ENCODE measurements at regions of chr5 and their contacts with region 1.

Region 1: DNA sequence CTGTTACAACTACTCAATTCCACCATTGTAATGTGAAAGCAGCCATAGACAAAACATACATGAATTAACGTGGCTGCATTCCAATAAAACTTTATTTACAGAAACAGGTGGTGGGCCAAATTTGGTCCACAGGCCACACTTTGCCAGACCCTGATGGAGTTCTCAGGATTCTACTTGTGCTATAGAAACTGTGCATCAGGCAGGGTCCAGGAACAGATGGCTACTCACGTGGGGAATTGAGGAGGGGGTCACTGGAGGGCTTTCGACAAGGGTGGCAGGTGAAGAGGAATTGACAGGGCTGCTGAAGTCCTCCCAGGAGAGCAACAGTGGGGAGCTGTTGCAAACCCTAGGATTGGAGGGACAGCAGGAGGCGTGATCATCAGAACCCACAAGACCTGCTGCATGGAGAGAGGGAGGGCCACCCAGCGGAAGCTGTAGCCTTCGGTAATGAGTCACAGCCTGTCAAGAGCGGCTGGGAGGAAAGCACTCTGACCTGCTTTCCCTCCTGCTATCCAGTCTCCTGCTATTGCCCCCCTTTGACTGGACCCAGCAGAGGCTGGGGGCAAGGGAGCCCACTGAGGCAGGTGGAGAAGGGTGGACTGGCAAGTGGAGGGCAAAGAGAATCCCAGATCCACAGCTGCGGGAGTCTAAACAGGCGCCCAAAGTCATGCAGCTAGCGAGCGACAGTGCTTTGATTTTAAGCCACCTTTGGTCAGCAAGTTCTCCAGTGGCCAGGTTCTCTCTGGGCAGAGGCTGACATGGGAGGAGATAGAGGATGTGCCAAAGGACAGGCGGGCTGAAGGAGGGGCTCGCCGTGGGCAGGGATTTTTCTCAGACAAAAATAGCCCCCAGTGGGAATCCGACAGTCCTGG is 138.3 kb upstream of the SMIM23 start:
- DNase-seq: peak; percentile 86
- H3K4me3 ChIP-seq: no peak overlapping the region
- H3K27ac ChIP-seq: peak overlapping the region; percentile 30
- H3K4me1 ChIP-seq: peaks cover 13% of the 10 kb centered on the region
- H3K27me3 ChIP-seq: no peaks in the 10 kb centered on the region
- CTCF ChIP-seq: peak in 1 of 2 donors; percentile 15
- POLR2A ChIP-seq: no peak

Region 2: DNA sequence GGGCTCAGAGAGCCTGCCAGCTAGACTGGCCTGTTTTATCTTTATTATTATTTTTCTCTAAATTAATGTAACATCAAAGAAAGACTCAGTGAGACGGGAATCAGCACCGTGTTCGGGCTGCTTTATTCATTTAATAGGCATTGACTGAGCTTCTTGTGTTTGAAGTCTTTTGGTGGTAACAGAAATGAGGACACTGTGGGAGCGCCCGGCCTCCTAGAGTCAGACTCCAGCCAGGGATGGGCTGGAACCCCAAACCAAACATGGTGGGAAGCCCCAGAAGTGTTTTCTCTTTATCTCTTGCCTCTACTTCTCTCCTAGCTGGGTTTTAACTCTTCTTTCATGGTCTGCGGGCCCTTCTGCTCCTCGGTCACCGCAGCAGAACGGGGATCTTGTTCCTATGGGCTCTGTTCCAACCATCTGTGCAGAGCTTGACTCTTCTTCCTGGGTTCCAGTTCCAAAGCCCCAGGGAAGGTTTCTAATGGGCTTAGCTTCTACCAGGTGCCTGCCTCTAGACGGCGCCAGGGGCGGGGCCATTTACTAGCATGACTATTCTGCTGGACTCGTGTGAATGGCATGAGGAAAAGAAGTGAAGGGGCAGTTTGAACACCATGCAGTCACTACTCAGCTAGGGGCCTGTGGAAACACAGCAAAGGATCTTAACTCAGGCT is 104.0 kb before region 1 on chr5:
- CTCF ChIA-PET with region 1: no interaction called
- POLR2A ChIA-PET with region 1: no interaction called
- dilution Hi-C with region 1: no loop called
- intact Hi-C with region 1: no loop called
- DNase-seq: no peak
- H3K4me3 ChIP-seq: no peak overlapping the region
- H3K27ac ChIP-seq: no peak overlapping the region
- H3K4me1 ChIP-seq: no peaks in the 10 kb centered on the region
- H3K27me3 ChIP-seq: no peaks in the 10 kb centered on the region
- CTCF ChIP-seq: no peak
- POLR2A ChIP-seq: no peak

Region 3: GRCh38 chr5:171614971-171615653 is 32.2 kb before region 1 on chr5:
- CTCF ChIA-PET with region 1: no interaction called
- POLR2A ChIA-PET with region 1: no interaction called
- dilution Hi-C with region 1: no loop called
- intact Hi-C with region 1: no loop called
- DNase-seq: no peak
- H3K4me3 ChIP-seq: no peak overlapping the region
- H3K27ac ChIP-seq: no peak overlapping the region
- H3K4me1 ChIP-seq: no peaks in the 10 kb centered on the region
- H3K27me3 ChIP-seq: peaks cover 2 to 7% of the 10 kb centered on the region in 2 experiments
- CTCF ChIP-seq: no peak
- POLR2A ChIP-seq: no peak

Region 4: GRCh38 chr5:171657473-171657872 is 10.2 kb after region 1 on chr5:
- CTCF ChIA-PET with region 1: interaction called, 11 read pairs
- POLR2A ChIA-PET with region 1: interaction called, 3 read pairs
- dilution Hi-C with region 1: no loop called
- intact Hi-C with region 1: no loop called
- DNase-seq: no peak
- H3K4me3 ChIP-seq: no peak overlapping the region
- H3K27ac ChIP-seq: no peak overlapping the region
- H3K4me1 ChIP-seq: no peaks in the 10 kb centered on the region
- H3K27me3 ChIP-seq: no peaks in the 10 kb centered on the region
- CTCF ChIP-seq: no peak
- POLR2A ChIP-seq: no peak

Region 5: DNA sequence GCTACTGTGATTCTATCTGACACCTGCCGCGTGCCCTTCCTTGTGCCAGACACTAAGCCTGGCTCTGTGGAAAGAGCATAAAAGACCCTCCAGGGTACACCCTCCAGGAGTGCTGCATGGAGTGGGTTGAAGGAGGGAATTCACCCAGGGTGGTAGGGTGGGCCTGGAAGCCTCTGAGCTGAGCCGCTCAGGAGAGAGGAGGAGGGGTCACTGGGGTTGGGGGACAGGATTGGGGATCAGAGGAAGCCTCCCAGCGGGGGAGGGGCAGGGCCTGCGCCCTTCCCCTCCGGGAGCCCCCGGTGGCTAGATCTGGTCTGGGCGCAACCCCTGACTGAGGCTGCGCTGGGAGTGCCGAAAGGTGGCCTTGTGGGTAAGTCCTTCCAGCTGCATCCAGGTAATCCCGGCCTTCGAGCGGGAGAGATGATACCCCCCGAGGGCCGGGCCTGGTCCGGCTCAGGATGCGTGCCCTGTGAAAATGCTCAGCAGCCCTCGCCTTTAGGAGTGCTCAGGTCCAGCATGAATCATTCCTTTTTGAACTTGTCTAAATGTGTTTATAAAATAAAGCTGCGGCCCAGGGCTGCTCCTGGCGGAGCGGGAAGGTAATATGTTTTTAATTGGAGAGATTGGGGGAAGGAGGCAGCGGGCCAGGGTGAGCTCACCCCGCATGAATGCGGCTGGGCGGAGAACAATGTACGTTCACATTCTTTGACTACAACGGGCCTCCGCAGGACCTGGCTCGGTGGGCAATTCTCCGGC is 20.3 kb after region 1 on chr5:
- CTCF ChIA-PET with region 1: interaction called, 24 read pairs
- POLR2A ChIA-PET with region 1: no interaction called
- dilution Hi-C with region 1: no loop called
- intact Hi-C with region 1: loop called (anchors 1 kb)
- DNase-seq: peak; percentile 88
- H3K4me3 ChIP-seq: no peak overlapping the region
- H3K27ac ChIP-seq: peak overlapping the region; percentile 78
- H3K4me1 ChIP-seq: peaks cover 12% of the 10 kb centered on the region
- H3K27me3 ChIP-seq: no peaks in the 10 kb centered on the region
- CTCF ChIP-seq: peak; percentile 12 to 22
- POLR2A ChIP-seq: no peak

Region 6: GRCh38 chr5:171688696-171689495 is 41.6 kb after region 1 on chr5:
- CTCF ChIA-PET with region 1: no interaction called
- POLR2A ChIA-PET with region 1: no interaction called
- dilution Hi-C with region 1: no loop called
- intact Hi-C with region 1: no loop called
- DNase-seq: no peak
- H3K4me3 ChIP-seq: no peak overlapping the region
- H3K27ac ChIP-seq: no peak overlapping the region
- H3K4me1 ChIP-seq: no peaks in the 10 kb centered on the region
- H3K27me3 ChIP-seq: no peaks in the 10 kb centered on the region
- CTCF ChIP-seq: no peak
- POLR2A ChIP-seq: no peak

Region 7: DNA sequence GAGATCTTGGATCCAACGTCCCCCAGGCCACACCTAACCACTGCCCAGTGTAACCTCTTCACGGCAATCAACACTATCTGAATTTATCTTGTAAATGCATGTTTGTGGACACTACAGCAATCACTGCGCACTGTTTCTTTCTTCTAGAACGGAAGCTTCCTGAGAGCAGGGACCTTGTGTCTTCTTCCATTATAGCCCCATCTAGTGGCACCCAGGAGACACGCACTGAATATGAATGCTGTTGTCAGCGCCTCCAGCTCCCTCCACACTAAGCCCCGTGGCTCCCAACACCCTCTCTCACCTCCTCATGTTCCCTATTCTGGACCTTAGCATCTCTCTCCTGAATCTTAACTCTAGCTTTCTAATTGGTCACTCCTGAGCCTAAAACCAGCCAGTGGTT is 211.0 kb after region 1 on chr5:
- CTCF ChIA-PET with region 1: interaction called, 10 read pairs
- POLR2A ChIA-PET with region 1: no interaction called
- dilution Hi-C with region 1: no loop called
- intact Hi-C with region 1: no loop called
- DNase-seq: no peak
- H3K4me3 ChIP-seq: no peak overlapping the region
- H3K27ac ChIP-seq: no peak overlapping the region
- H3K4me1 ChIP-seq: no peaks in the 10 kb centered on the region
- H3K27me3 ChIP-seq: no peaks in the 10 kb centered on the region
- CTCF ChIP-seq: peak; percentile 37 to 48
- POLR2A ChIP-seq: no peak

Region 8: DNA sequence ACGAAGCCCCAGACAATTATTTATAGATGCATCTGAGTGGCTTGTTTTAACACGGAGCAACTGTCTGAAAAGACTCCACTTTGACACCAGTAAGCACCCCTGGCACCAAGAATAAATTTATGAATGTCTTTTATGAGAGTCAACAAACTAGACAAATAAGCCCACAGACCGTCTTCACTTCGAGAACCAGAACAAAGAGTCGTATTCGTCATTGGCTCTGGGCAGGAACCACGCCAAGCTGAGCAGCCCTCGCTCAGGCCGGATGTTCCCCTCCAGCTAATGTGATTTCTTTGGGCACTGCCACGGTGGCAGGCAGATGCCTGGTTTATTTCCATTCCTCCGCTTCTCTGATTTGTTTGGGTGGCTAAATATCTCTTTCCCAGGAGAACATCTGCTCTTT is 1772.8 kb after region 1 on chr5:
- CTCF ChIA-PET with region 1: no interaction called
- POLR2A ChIA-PET with region 1: no interaction called
- dilution Hi-C with region 1: no loop called
- intact Hi-C with region 1: no loop called
- DNase-seq: no peak
- H3K4me3 ChIP-seq: no peak overlapping the region
- H3K27ac ChIP-seq: no peak overlapping the region
- H3K4me1 ChIP-seq: no peaks in the 10 kb centered on the region
- H3K27me3 ChIP-seq: no peaks in the 10 kb centered on the region
- CTCF ChIP-seq: no peak
- POLR2A ChIP-seq: no peak

Measured in endothelial cell of umbilical vein (primary cell).